HCT116 (cell line): ENCODE measurements at regions of chr4 and their contacts with region 1.

Region 1: DNA sequence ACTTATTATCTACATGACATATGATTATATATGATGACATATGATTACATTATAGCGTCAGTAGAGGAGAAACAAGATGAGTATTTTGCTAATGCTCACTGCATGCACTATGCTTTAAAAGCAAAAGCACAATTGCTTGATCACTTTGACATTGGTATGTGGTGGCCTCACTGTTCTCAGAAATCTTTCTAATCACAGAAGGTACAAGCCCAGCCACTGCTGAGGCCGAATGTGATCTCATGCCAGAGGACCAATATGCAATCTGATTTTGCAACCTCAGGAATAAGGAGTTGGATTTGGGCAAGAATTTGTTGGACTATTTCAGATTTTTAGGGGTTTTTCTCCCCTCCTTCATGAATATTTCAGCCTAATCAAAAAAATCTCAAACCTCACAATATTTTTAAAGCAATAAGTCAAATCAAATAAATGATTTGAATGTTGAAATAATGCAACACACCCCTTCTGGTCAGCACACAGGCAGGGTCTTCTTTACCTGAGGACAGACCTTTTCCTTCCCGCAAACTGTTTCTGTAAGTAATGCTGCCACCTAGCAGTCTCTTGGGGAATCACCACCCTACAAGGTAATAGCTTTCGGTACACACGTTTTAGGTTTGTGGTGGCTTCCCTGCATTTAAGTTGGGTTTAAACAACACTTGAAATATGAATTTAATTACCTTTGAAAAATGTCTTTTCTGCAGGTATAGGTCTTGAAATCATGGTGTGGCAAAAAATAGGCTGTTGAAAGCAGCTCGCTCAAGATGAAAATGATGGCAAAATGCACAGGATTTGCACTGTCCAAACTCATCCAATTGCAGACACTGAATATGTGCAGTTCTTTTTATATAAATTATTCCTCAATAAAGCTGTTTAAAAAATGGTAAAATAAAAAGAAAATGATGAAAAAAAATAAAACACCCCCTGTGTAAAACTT is 4.8 kb upstream of the CXCL13 start:
- DNase-seq: peak; percentile 37
- ATAC-seq: peak; percentile 76
- H3K4me3 ChIP-seq: no peak overlapping the region
- H3K27ac ChIP-seq: no peak overlapping the region
- H3K4me1 ChIP-seq: no peaks in the 10 kb centered on the region
- H3K27me3 ChIP-seq: peaks cover 26% of the 10 kb centered on the region
- CTCF ChIP-seq: peak; percentile 68 to 88 (median 87)
- POLR2A ChIP-seq: no peak
- RAD21 ChIP-seq: peak; percentile 71

Region 2: GRCh38 chr4:77007358-77008191 is 593.2 kb before region 1 on chr4:
- CTCF ChIA-PET with region 1: no interaction called
- POLR2A ChIA-PET with region 1: no interaction called
- RAD21 ChIA-PET with region 1: no interaction called
- intact Hi-C with region 1: no loop called
- DNase-seq: no peak
- ATAC-seq: no peak
- H3K4me3 ChIP-seq: no peak overlapping the region
- H3K27ac ChIP-seq: no peak overlapping the region
- H3K4me1 ChIP-seq: no peaks in the 10 kb centered on the region
- H3K27me3 ChIP-seq: no peaks in the 10 kb centered on the region
- CTCF ChIP-seq: no peak
- POLR2A ChIP-seq: no peak
- RAD21 ChIP-seq: no peak

Region 3: DNA sequence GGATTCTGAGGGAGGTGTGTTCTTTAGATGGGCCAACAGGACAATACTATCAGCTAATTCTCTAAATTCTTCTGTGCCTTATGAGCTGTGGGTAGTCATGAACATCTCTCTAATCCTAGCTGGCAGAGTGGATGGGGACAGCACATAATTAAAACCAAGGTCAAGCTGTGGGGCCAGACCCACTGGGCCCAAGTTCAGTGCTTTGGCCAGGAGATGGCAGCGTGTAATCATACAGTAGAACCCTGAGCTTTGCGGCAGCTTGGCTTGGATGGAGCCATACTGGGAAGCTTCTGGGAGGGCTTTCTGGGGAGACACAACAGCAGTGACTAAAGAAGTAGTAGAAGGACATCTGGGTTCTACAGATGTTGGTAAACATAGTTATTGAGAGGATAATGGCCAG is 135.5 kb before region 1 on chr4:
- CTCF ChIA-PET with region 1: interaction called, 36 read pairs
- POLR2A ChIA-PET with region 1: no interaction called
- RAD21 ChIA-PET with region 1: interaction called, 4 to 6 read pairs
- intact Hi-C with region 1: loop called (anchors 2 kb)
- DNase-seq: no peak
- ATAC-seq: peak; percentile 90
- H3K4me3 ChIP-seq: no peak overlapping the region
- H3K27ac ChIP-seq: no peak overlapping the region
- H3K4me1 ChIP-seq: no peaks in the 10 kb centered on the region
- H3K27me3 ChIP-seq: no peaks in the 10 kb centered on the region
- CTCF ChIP-seq: peak; percentile 57 to 62 (median 58); a peak in 5 of 6 replicates
- POLR2A ChIP-seq: no peak
- RAD21 ChIP-seq: peak; percentile 73